ENCODE measurements at regions of chr13 and their contacts with region 1.

Region 1: DNA sequence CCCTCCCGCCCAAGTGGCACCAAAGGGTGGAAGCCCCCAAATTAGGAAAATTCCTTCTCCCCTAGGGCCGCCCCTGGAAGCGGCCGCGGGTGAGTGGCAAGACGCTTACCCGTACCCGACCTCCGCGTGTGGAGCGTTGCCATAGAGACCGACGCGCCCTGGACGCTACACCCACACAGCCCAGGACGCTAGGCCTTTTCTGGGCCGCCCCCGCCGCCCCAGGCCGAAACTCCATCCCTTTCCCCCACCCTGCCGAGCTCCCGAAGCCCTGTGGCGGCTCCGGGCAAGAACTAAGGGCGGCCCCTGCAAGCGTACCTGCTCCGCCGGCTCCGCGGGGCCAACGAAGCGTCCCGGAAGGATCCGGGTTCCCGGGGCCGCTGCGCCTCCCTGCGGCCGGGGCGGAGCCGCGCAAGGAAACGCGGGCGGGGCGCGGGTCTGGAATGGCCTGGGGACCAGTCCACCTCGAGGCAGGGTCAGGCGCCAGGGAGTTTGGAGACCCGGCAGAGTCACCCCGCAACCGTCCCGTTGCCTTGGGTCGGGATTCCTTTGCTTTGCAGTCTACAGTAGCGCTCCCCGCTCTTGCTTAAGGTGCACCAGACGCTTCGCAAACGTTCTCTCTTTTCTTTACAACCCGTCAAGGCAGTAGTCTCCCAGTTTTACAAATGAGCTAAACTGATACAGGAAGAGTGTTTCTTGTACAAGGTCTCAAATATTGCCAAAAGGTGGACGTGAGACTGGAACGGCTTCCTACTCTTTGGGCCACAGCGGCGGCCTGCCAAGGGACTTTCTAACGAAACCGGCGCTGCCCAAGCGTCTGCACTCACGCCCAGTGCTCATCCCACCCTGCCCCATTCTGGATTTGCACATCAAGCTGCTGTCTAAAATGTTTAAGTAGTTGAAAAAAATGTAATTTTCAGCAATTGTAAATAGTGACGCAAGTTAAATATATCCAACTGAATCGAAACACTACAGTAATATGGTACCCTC is at the start of gene NEK5:
- DNase-seq: peak; percentile 62 to 94 (median 68)
- ATAC-seq: peak; percentile 95
- H3K4me3 ChIP-seq: peak within 1 kb of the TSS; percentile 59 to 82
- H3K27ac ChIP-seq: no peak within 1 kb of the TSS
- H3K4me1 ChIP-seq: peaks cover 9 to 21% of the 10 kb centered on the region in 2 donors
- H3K27me3 ChIP-seq: peaks cover 0 to 12% of the 10 kb centered on the region in 2 donors
- CTCF ChIP-seq: peak; percentile 66 to 69
- polyA plus RNA-seq, gene NEK5: 3.0 to 6.9 (median 5.7) TPM

Region 2: DNA sequence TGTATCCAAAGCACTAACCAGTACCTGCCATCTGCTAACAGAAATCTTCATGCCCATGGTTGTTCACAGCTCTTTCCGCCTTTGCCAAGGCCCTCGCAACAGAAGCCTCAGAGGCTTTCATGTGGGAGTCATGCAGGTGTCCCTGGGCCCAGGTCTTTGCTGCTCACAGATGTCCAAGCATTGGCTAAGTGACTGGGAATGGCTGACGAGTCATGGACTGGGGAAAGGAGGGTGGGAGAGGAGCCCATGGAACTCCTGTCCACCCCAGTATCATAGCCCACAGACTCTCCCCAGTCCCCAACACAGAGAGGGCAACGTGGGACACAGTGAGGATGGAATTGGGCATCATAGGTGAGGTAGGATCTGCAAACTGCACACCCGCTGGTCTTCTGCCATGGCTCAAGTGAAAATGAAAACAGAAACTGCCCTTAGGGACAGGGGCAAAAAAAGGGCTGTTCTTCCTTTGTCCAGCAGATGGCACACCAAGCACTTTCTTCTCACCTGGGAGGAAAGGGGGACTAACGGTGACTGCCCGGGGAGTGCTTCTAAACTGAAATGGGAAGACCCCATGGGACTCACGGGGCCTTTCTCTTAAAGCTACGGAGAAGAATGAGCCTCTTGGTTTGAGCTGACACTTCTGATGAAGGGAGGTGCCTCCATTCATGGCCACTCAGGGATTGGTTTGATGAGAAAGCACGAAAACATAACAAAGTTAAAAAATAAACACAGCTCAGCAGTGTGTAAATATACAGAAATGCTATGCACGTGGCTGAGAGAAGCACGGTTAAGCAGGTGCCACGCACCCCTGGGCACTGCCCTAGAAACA is 314.0 kb before region 1 on chr13:
- intact Hi-C with region 1: loop called in 1 of 2 experiments (anchors 10 kb)
- DNase-seq: peak in 2 of 4 donors; percentile 52 to 65
- ATAC-seq: peak; percentile 92
- H3K4me3 ChIP-seq: peak overlapping the region in 1 of 2 donors; percentile 2
- H3K27ac ChIP-seq: no peak overlapping the region
- H3K4me1 ChIP-seq: peaks cover 5 to 30% of the 10 kb centered on the region in 2 donors
- H3K27me3 ChIP-seq: no peaks in the 10 kb centered on the region
- CTCF ChIP-seq: peak; percentile 65 to 85

Region 3: GRCh38 chr13:51945149-51945548 is 183.9 kb before region 1 on chr13:
- intact Hi-C with region 1: no loop called
- DNase-seq: no peak
- ATAC-seq: no peak
- H3K4me3 ChIP-seq: no peak overlapping the region
- H3K27ac ChIP-seq: no peak overlapping the region
- H3K4me1 ChIP-seq: no peaks in the 10 kb centered on the region
- H3K27me3 ChIP-seq: no peaks in the 10 kb centered on the region
- CTCF ChIP-seq: no peak

Region 4: DNA sequence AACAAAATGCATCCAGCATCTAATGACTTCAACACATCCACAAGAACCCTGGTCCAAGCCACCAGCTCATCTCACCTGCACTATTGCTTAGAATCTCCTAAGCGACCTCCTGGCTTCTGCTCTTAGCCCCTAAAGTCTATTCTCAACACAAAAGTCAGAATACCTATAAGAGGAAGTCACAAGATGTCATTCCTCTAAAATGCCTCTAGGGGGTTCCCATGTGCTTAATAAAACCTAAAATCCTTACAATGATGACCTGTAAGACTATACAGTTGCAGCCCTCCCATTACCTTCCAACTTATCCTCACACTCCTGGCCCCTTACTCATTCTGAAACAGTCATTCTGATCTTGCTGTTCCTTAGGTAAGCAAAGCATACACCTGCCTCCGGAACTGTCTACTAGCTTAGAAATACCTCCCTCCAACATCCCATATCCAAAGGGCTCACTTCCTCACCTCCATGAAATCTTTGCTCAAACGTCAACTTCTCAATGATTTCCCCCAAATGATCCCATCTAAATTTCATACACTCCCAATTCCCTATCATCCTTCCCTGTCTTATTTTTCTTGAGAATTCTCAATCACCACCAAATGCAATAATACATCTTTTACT is 127.8 kb before region 1 on chr13:
- intact Hi-C with region 1: loop called in 1 of 2 experiments (anchors 5 kb)
- DNase-seq: no peak
- ATAC-seq: peak; percentile 78
- H3K4me3 ChIP-seq: no peak overlapping the region
- H3K27ac ChIP-seq: no peak overlapping the region
- H3K4me1 ChIP-seq: peaks cover 0 to under 1% of the 10 kb centered on the region in 2 donors
- H3K27me3 ChIP-seq: no peaks in the 10 kb centered on the region
- CTCF ChIP-seq: peak; percentile 71 to 75

Measured in left lung (tissue), 14 donors.